Activated T-helper 2 cell treated with anti-CD3 and anti-CD28 coated beads, Interferon-gamma antibody, Interleukin-2, Interleukin-4, amounts not matched to agents 10 μg/mL and 5 μg/mL and 100 μg/mL, durations not matched to agents 14 hours and 24 hours and 36 hours (primary cell): ENCODE measurements at regions of chr7 and their contacts with region 1.

Region 1: DNA sequence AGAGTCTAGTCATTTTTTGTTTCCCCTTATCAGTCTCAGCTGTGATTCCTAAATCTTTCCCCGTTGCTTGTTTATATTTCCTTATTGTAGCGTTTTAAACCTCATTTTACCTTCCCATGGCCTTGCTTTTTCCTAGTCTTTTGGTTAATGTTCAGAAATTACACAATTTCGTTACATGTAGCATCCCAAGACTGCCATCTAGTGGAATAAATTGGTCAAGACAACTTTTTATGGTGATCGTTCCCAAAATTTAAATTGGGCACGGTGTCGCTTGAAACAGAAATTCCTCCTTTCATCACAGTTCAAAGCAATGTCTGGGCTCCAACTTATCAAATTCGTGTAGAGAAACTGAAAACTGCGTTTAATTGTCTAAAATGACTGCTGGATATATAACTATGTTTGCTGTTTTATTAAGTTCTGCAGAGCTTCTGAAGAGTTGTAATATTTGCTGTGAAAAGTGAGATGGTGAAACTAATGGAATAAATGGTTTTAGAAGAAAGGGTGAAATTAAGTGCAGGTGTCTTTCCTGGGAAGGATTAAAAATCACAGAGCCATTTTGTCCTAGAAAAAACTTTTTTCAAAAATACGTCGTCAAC is 370.2 kb downstream of the PHF14 start:
- DNase-seq: no peak
- H3K4me3 Mint-ChIP-seq: no peak overlapping the region
- H3K27ac Mint-ChIP-seq: no peak overlapping the region
- H3K4me1 Mint-ChIP-seq: peaks cover 5% of the 10 kb centered on the region
- H3K27me3 Mint-ChIP-seq: peaks cover 16% of the 10 kb centered on the region

Region 2: GRCh38 chr7:10889266-10889898 is 454.5 kb before region 1 on chr7:
- intact Hi-C with region 1: loop called (anchors 10 kb)
- DNase-seq: peak; percentile 10
- H3K4me3 Mint-ChIP-seq: peak overlapping the region; percentile 18
- H3K27ac Mint-ChIP-seq: no peak overlapping the region
- H3K4me1 Mint-ChIP-seq: peaks cover 10% of the 10 kb centered on the region
- H3K27me3 Mint-ChIP-seq: no peaks in the 10 kb centered on the region

Region 3: GRCh38 chr7:11369696-11370095 is 25.8 kb after region 1 on chr7:
- intact Hi-C with region 1: no loop called
- DNase-seq: no peak
- H3K4me3 Mint-ChIP-seq: no peak overlapping the region
- H3K27ac Mint-ChIP-seq: no peak overlapping the region
- H3K4me1 Mint-ChIP-seq: no peaks in the 10 kb centered on the region
- H3K27me3 Mint-ChIP-seq: no peaks in the 10 kb centered on the region

Region 4: GRCh38 chr7:11404355-11404754 is 60.4 kb after region 1 on chr7:
- intact Hi-C with region 1: no loop called
- DNase-seq: no peak
- H3K4me3 Mint-ChIP-seq: no peak overlapping the region
- H3K27ac Mint-ChIP-seq: no peak overlapping the region
- H3K4me1 Mint-ChIP-seq: no peaks in the 10 kb centered on the region
- H3K27me3 Mint-ChIP-seq: no peaks in the 10 kb centered on the region